Pancreas (tissue), 10 donors: ENCODE measurements at regions of chr1 and their contacts with region 1.

Region 1: DNA sequence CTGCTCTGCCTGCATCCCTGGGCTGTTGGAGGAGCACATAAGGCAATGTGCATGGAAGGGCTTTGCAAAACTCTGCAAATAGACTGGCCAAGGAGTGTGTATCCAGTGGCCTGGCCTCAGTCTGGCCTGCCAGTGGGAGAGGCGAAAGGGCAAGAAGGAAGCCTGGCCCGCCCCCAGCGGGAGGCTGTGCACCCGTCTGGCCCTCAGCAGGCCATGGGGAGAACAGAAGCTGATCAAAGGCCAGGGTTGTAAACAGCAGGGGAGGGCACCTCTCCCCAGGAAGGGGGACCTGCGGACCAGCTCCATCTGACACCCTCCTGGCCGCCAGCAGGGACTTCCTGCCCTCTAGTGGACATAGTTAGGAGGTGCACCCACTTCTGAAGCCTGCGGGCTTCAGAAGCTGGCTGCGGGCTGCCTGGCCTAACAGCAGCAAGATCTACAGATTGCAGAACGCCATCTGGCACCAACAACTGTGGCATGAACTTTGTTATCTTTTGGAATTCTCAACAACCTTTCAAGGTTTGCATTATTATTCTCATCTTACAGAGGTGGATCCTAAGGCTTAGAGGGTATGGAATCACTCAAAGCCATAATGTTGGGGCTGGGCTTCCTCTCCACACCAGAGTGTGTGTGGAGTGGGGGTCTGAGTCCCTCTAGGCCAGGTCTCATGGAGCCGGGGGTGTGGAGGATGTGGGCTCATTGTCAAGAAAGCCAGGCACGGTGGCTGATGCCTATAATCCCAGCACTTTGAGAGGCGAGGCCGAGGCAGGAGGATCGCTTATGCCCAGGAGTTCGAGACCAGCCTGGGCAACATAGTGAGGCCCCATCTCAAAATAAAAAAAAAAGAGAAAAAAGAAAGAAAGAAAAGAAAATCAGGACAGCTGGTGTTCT is 18.9 kb upstream of the CDK18 start:
- DNase-seq: peak; percentile 59 to 85 (median 70)
- ATAC-seq: peak; percentile 82 to 94 (median 92)
- H3K4me3 ChIP-seq: no peak overlapping the region
- H3K27ac ChIP-seq: no peak overlapping the region
- H3K4me1 ChIP-seq: no peaks in the 10 kb centered on the region
- H3K27me3 ChIP-seq: no peaks in the 10 kb centered on the region
- CTCF ChIP-seq: peak; percentile 85 to 98 (median 96)

Region 2: GRCh38 chr1:205396967-205397616 is 88.5 kb before region 1 on chr1:
- intact Hi-C with region 1: loop called in 1 of 3 experiments (anchors 10 kb)
- DNase-seq: peak in 2 of 6 donors; percentile 12 to 28
- ATAC-seq: peak in 3 of 4 donors; percentile 87 to 97 (median 89)
- H3K4me3 ChIP-seq: no peak overlapping the region
- H3K27ac ChIP-seq: no peak overlapping the region
- H3K4me1 ChIP-seq: no peaks in the 10 kb centered on the region
- H3K27me3 ChIP-seq: no peaks in the 10 kb centered on the region
- CTCF ChIP-seq: peak; percentile 36 to 56 (median 48)

Region 3: GRCh38 chr1:205440476-205441317 is 44.9 kb before region 1 on chr1:
- intact Hi-C with region 1: no loop called
- DNase-seq: peak in 5 of 6 donors; percentile 60 to 74 (median 72)
- ATAC-seq: peak; percentile 77 to 86 (median 82)
- H3K4me3 ChIP-seq: no peak overlapping the region
- H3K27ac ChIP-seq: peak overlapping the region; percentile 67 to 87 (median 82)
- H3K4me1 ChIP-seq: peaks cover 0 to 21% (median 7%) of the 10 kb centered on the region in 3 donors
- H3K27me3 ChIP-seq: no peaks in the 10 kb centered on the region
- CTCF ChIP-seq: no peak

Region 4: DNA sequence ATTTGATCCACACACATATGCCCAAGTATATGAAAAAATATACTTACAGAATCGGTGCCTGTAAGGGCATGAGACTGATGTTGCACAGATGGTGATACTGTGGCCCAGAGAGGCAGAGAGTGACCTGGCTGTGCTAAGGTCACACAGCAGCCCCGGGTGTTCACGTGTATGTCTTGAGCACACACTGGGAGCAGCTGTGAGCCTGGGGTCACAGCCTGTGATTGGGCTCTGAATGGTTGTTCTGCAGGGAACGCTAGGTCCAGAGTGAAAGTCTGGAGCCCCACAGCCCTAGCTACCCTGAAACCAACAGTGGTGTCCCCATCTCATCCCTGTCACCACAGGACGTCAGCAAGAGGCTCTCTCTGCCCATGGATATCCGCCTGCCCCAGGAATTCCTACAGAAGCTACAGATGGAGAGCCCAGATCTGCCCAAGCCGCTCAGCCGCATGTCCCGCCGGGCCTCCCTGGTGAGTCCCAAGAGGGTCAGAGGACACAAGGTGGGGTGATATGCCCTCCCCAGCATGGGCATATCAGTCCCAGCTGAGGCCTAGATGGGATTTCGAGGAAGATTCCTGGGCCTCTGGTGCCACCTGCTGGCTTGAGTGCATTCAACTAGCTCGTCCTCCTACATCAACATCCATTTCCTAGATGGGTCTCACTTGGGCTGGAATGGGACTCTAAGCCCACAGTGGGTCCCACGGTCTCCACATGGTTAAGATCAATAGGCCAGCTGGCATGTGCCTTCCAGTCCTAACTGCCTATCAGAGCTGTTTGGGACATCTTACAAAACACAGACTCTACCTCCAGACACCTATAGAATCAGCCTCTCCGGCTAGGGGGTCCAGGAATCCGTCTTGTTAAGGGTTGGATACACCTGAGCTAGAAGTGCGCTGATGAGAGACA is 38.6 kb after region 1 on chr1:
- intact Hi-C with region 1: loop called in 2 of 3 experiments (anchors 2 to 5 kb)
- DNase-seq: peak; percentile 62 to 86 (median 77)
- ATAC-seq: peak; percentile 63 to 81 (median 76)
- H3K4me3 ChIP-seq: no peak overlapping the region
- H3K27ac ChIP-seq: no peak overlapping the region
- H3K4me1 ChIP-seq: no peaks in the 10 kb centered on the region
- H3K27me3 ChIP-seq: no peaks in the 10 kb centered on the region
- CTCF ChIP-seq: peak; percentile 47 to 62 (median 59)

Region 5: DNA sequence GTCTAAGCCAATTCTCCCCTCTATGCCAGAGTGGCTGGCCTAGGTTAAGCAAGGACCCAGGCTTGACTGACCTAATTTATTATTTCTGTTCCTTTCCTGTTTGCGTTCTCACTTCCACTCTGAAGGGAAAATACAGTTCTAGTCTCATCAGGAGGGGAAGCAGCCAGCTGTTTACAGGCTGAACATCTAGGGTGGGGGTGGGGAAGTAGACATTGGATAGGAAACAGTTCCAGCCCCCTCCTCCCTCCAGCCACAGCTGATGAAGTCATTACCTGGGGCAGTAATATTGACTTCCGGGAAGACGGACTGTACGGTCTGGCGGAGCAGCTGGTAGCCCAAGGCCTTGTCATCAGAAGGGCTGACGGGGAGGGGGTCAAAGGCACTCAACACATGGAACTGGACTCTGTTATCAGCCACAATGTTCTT is 346.8 kb after region 1 on chr1:
- intact Hi-C with region 1: no loop called
- DNase-seq: peak in 2 of 6 donors; percentile 37 to 54
- ATAC-seq: peak; percentile 60 to 72 (median 71)
- H3K4me3 ChIP-seq: no peak overlapping the region
- H3K27ac ChIP-seq: no peak overlapping the region
- H3K4me1 ChIP-seq: peaks cover 0 to 9% (median 3%) of the 10 kb centered on the region in 3 donors
- H3K27me3 ChIP-seq: no peaks in the 10 kb centered on the region
- CTCF ChIP-seq: no peak